ENCODE measurements at regions of chr1 and their contacts with region 1.

Region 1: GRCh38 chr1:112715264-112716053 is at the start of gene PPM1J:
- DNase-seq: peak; percentile 92 to 94
- ATAC-seq: peak; percentile 82 to 92 (median 86)
- H3K4me3 ChIP-seq: peak within 1 kb of the TSS; percentile 46
- H3K4me3 Mint-ChIP-seq: peak within 1 kb of the TSS; percentile 93
- H3K27ac ChIP-seq: no peak within 1 kb of the TSS
- H3K27ac Mint-ChIP-seq: peak within 1 kb of the TSS; percentile 67 to 87
- H3K4me1 ChIP-seq: peaks cover 37% of the 10 kb centered on the region
- H3K4me1 Mint-ChIP-seq: peaks cover 14 to 29% of the 10 kb centered on the region in 2 donors
- H3K27me3 ChIP-seq: peaks cover 18% of the 10 kb centered on the region
- H3K27me3 Mint-ChIP-seq: peaks cover 0 to 8% of the 10 kb centered on the region in 2 donors
- CTCF ChIP-seq: no peak
- total RNA-seq, gene PPM1J: 0.26 TPM in 1 of 3 donors, not detected in the others

Region 2: GRCh38 chr1:112700290-112701226 is 14.9 kb before region 1 on chr1:
- intact Hi-C with region 1: loop called (anchors 2 kb)
- DNase-seq: peak; percentile 74 to 90
- ATAC-seq: peak; percentile 66 to 71 (median 70)
- H3K4me3 ChIP-seq: no peak overlapping the region
- H3K4me3 Mint-ChIP-seq: peak overlapping the region; percentile 65
- H3K27ac ChIP-seq: peak overlapping the region; percentile 94
- H3K27ac Mint-ChIP-seq: peak overlapping the region; percentile 90 to 93
- H3K4me1 ChIP-seq: peaks cover 84% of the 10 kb centered on the region
- H3K4me1 Mint-ChIP-seq: peaks cover 71 to 78% of the 10 kb centered on the region in 2 donors
- H3K27me3 ChIP-seq: no peaks in the 10 kb centered on the region
- H3K27me3 Mint-ChIP-seq: no peaks in the 10 kb centered on the region
- CTCF ChIP-seq: no peak

Region 3: DNA sequence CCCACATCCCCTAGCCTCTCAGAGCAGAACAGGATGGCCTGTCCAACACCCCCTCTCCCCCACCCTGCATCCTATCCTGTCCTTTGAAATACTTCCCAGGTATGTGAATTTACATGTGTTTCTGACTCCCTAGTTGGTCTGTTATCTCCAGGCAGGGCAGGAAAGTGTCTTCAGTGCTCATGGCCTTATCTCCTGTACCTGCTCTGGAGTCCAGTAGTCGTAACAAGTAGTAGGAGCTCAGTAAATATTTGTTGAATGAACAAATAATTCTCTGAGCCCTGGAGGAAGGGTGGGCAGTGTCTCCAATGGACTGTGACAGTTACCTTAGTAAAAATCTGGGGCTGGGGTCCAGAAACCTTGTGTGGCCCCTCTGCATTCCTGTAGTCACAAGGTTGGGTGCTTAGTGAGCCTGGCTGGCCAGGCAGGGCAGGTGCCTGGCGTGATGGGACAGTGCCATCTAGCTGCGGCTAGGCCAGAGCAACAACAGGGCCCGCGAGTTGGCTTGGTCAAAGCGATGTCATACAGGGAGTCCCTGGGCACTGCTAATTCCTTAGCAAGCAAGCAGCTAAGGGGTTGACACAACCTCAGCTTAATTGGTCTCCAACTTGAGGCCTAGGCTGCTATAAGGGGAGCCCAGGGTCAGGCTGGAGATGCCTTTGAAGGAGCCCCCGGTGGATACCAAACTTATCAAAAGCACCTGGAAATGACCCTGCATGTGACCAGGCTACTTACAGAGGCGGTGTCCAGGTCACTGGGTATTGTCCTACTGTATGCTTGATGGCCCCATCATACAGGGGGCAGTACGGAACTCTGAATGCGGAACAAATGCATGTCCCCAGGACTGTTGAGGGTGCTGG is 88.7 kb after region 1 on chr1:
- intact Hi-C with region 1: loop called (anchors 1 kb)
- DNase-seq: peak; percentile 45 to 62
- ATAC-seq: peak; percentile 58 to 92 (median 89)
- H3K4me3 ChIP-seq: no peak overlapping the region
- H3K4me3 Mint-ChIP-seq: no peak overlapping the region
- H3K27ac ChIP-seq: no peak overlapping the region
- H3K27ac Mint-ChIP-seq: no peak overlapping the region
- H3K4me1 ChIP-seq: no peaks in the 10 kb centered on the region
- H3K4me1 Mint-ChIP-seq: peaks cover 0 to 3% of the 10 kb centered on the region in 2 donors
- H3K27me3 ChIP-seq: peaks cover 2% of the 10 kb centered on the region
- H3K27me3 Mint-ChIP-seq: peaks cover 0 to 13% of the 10 kb centered on the region in 2 donors
- CTCF ChIP-seq: peak; percentile 58

Region 4: GRCh38 chr1:113042285-113043143 is 327.1 kb after region 1 on chr1:
- intact Hi-C with region 1: loop called (anchors 10 kb)
- DNase-seq: peak in 1 of 2 donors; percentile 38
- ATAC-seq: peak; percentile 27 to 61 (median 54)
- H3K4me3 ChIP-seq: no peak overlapping the region
- H3K4me3 Mint-ChIP-seq: no peak overlapping the region
- H3K27ac ChIP-seq: no peak overlapping the region
- H3K27ac Mint-ChIP-seq: peak overlapping the region; percentile 61 to 73
- H3K4me1 ChIP-seq: peaks cover 34% of the 10 kb centered on the region
- H3K4me1 Mint-ChIP-seq: peaks cover 36 to 45% of the 10 kb centered on the region in 2 donors
- H3K27me3 ChIP-seq: no peaks in the 10 kb centered on the region
- H3K27me3 Mint-ChIP-seq: no peaks in the 10 kb centered on the region
- CTCF ChIP-seq: peak; percentile 13

Region 5: DNA sequence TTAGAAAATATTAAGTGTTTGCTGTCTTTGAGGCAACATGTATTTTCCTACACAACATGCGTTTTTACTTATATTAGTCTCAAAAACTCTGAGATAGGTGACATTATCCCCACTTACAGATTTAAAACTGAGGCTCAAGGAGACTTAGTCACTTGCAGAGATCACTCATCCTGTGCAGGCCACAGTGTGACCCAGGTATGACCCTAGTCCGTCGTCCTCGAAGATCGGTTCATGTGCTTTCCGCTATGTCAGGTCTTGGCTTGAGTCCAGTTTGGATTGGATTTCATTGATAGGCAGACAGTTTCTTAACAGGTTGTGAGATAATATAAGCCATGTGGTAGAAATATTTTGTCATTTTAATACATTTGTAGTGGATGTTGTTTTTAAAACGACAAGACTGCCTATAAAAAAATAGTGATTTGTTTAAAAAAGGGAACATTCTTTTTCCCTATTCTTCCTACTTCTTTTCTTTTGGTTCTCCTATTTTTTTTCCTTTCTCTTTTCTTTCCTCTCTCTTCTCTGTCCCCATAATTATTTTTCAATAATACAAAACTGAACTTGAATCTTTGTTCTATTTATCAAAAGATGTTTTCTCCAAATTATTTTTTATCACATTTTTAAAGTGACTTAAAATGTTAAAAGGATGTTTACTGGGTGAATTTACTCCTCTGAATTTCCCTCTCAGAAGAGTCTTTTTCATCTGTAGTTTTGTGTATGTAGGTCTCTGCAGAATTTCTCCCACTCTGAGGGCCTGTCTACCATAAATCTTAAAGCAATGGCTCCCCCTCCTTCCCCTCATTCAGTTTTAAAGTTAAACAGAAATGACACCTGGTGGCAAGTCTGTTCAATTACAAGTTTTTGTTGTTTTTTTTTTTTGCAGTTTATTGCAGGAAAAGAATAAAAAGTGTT is 962.0 kb after region 1 on chr1:
- intact Hi-C with region 1: loop called (anchors 2 kb)
- DNase-seq: peak in 1 of 2 donors; percentile 60
- ATAC-seq: peak in 2 of 3 donors; percentile 36 to 57
- H3K4me3 ChIP-seq: no peak overlapping the region
- H3K4me3 Mint-ChIP-seq: no peak overlapping the region
- H3K27ac ChIP-seq: no peak overlapping the region
- H3K27ac Mint-ChIP-seq: no peak overlapping the region
- H3K4me1 ChIP-seq: no peaks in the 10 kb centered on the region
- H3K4me1 Mint-ChIP-seq: no peaks in the 10 kb centered on the region
- H3K27me3 ChIP-seq: no peaks in the 10 kb centered on the region
- H3K27me3 Mint-ChIP-seq: peaks cover 4 to 16% of the 10 kb centered on the region in 2 donors
- CTCF ChIP-seq: peak; percentile 58